ENCODE measurements at regions of chr20 and their contacts with region 1.

Region 1: DNA sequence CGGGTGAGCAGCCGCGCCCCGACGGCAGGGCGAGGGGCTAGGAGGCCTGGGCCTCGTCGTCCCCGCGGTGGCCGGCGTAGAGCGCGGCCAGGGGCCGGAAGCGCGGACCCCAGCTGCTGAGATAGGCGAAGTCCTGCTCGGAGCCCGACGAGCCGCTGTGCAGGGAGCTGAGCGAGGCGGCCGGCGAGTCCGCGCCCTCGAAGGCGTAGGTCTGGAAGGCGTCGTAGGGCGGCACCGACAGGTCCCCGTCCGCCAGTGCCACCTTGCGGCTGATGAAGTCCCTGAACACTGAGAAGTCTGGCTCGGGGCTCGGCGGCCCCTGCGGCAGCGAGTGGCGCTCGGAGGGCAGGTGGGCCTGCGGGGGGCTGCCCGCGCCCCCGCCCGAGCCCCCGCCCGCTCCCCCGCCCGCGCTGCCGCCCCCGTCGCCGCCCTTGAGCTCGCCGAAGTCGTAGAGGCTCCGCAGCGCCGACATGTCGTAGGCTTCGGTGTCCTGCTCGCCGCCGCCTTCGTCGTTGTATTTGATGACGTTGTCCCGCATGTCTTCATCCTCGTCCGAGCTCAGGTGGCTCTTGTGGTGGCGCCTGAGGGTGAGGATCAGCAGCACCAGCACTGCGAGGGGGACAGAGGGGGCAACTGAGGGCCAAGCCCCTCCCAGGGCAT is 56.5 kb downstream of the CD40 start:
- DNase-seq: peak; percentile 74
- H3K4me3 ChIP-seq: no peak overlapping the region
- H3K27ac ChIP-seq: no peak overlapping the region
- H3K4me1 ChIP-seq: no peaks in the 10 kb centered on the region
- H3K27me3 ChIP-seq: peaks cover 58% of the 10 kb centered on the region
- CTCF ChIP-seq: peak; percentile 29 to 60 (median 53)
- EP300 ChIP-seq: no peak
- POLR2A ChIP-seq: no peak

Region 2: DNA sequence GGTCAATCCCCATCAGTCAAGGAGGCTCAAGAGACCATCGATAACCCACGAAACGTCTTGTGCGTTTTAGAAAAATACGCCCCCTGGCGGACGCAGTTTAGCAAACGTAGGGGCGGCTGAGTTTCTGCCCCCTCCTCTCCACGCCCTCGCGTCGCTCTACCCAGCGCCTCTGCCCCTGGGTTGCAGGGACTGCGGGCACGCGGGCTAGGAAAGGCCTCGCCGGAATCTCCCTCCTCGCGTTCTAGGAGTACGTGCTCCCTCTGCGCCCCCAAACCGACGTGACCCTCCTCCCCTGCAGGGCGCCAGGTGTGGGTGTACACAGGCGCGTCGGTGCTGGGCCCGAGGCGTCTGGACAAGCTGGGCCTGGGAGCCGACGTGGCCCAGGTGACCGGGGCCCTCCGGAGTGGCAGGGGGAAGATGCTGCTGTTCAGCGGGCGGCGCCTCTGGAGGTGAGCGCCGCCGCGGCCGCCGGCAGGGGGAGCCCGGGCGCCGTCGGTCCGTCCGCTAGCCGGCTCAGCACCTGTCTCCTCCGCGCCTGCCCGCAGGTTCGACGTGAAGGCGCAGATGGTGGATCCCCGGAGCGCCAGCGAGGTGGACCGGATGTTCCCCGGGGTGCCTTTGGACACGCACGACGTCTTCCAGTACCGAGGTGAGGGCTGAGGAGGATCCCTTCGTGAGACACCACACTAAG is 160.6 kb before region 1 on chr20:
- in situ Hi-C with region 1: loop called in 1 of 4 experiments (anchors 10 kb)
- intact Hi-C with region 1: no loop called
- DNase-seq: peak; percentile 60
- H3K4me3 ChIP-seq: peak overlapping the region in 1 of 4 donors; percentile 19
- H3K27ac ChIP-seq: no peak overlapping the region
- H3K4me1 ChIP-seq: peaks cover 4 to 22% (median 9%) of the 10 kb centered on the region in 4 donors
- H3K27me3 ChIP-seq: peaks cover 83% of the 10 kb centered on the region
- CTCF ChIP-seq: peak; percentile 73 to 88 (median 78)
- EP300 ChIP-seq: no peak
- POLR2A ChIP-seq: no peak